Activated naive CD4-positive, alpha-beta T cell treated with anti-CD3 and anti-CD28 coated beads for 36 hours (primary cell): ENCODE measurements at regions of chr21 and their contacts with region 1.

Region 1: GRCh38 chr21:41926117-41926806 is 27.6 kb downstream of the C2CD2 start:
- DNase-seq: peak; percentile 53
- H3K4me3 Mint-ChIP-seq: peak overlapping the region; percentile 85
- H3K27ac Mint-ChIP-seq: peak overlapping the region; percentile 97
- H3K4me1 Mint-ChIP-seq: peaks cover 71% of the 10 kb centered on the region
- H3K27me3 Mint-ChIP-seq: no peaks in the 10 kb centered on the region

Region 2: GRCh38 chr21:41879190-41879998 is 46.9 kb before region 1 on chr21 and contains the start of gene PRDM15:
- CTCF ChIA-PET with region 1: interaction called, 4 read pairs
- intact Hi-C with region 1: loop called (anchors 2 kb)
- DNase-seq: peak; percentile 86
- H3K4me3 Mint-ChIP-seq: peak within 1 kb of the TSS; percentile 84
- H3K27ac Mint-ChIP-seq: peak within 1 kb of the TSS; percentile 91
- H3K4me1 Mint-ChIP-seq: peaks cover 15% of the 10 kb centered on the region
- H3K27me3 Mint-ChIP-seq: no peaks in the 10 kb centered on the region
- total RNA-seq, gene PRDM15: 9.6 to 9.8 TPM

Region 3: DNA sequence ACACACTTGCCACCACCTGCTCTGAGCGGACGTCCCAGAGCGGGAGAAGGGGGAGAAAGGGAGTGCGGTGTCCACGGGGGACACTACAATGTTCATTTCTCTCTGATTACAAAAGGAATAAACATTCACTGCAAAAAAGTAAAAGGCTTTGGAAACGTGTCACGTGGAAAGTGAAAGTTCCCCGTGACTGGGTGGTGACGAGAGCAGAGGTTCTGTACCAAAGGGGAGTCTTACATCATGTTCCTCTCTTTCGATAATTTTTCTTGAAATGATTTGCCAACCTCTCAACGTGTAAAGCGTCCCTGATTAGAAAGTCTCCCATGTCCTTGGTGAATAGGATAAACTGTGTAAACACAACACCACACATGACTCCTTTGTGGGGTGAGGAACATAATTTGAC is 25.2 kb before region 1 on chr21:
- CTCF ChIA-PET with region 1: interaction called, 6 read pairs
- intact Hi-C with region 1: loop called (anchors 1 kb)
- DNase-seq: peak; percentile 78
- H3K4me3 Mint-ChIP-seq: no peak overlapping the region
- H3K27ac Mint-ChIP-seq: peak overlapping the region; percentile 75
- H3K4me1 Mint-ChIP-seq: peaks cover 26% of the 10 kb centered on the region
- H3K27me3 Mint-ChIP-seq: no peaks in the 10 kb centered on the region

Region 4: GRCh38 chr21:41953831-41954653 is 27.8 kb after region 1 on chr21 and contains the start of gene C2CD2:
- CTCF ChIA-PET with region 1: no interaction called
- intact Hi-C with region 1: loop called (anchors 1 kb)
- DNase-seq: peak; percentile 19
- H3K4me3 Mint-ChIP-seq: peak within 1 kb of the TSS; percentile 54
- H3K27ac Mint-ChIP-seq: no peak within 1 kb of the TSS
- H3K4me1 Mint-ChIP-seq: peaks cover 13% of the 10 kb centered on the region
- H3K27me3 Mint-ChIP-seq: peaks cover 4% of the 10 kb centered on the region
- total RNA-seq, gene C2CD2: 6.9 to 7.3 TPM

Region 5: DNA sequence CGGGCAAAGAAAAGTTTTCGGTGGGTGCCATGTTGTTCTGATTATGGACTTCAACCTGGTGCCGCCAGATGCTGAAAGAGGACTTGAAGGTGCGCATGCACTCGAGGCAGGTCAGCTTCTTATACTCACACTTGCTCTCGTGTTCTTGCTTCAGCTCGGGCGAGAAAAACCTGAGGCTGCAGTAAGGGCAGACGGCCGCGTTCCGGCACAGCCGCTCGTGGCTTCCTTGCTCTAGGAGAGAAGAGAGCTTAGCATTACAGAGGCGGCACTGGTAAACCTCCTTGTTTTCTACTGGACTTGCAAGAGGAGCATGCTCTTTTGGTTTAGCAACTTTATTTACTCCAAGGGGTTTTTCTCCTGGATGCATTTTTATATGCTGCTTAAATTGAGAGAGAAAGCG is 65.4 kb after region 1 on chr21:
- CTCF ChIA-PET with region 1: no interaction called
- intact Hi-C with region 1: no loop called
- DNase-seq: no peak
- H3K4me3 Mint-ChIP-seq: no peak overlapping the region
- H3K27ac Mint-ChIP-seq: no peak overlapping the region
- H3K4me1 Mint-ChIP-seq: peaks cover 2% of the 10 kb centered on the region
- H3K27me3 Mint-ChIP-seq: no peaks in the 10 kb centered on the region

Region 6: GRCh38 chr21:42002421-42002958 is 76.2 kb after region 1 on chr21:
- CTCF ChIA-PET with region 1: interaction called, 3 read pairs
- intact Hi-C with region 1: loop called (anchors 1 kb)
- DNase-seq: peak; percentile 89
- H3K4me3 Mint-ChIP-seq: peak overlapping the region; percentile 27
- H3K27ac Mint-ChIP-seq: peak overlapping the region; percentile 86
- H3K4me1 Mint-ChIP-seq: peaks cover 62% of the 10 kb centered on the region
- H3K27me3 Mint-ChIP-seq: no peaks in the 10 kb centered on the region

Region 7: GRCh38 chr21:42009831-42010523 is 83.7 kb after region 1 on chr21 and contains the start of gene ZBTB21:
- CTCF ChIA-PET with region 1: no interaction called
- intact Hi-C with region 1: loop called (anchors 1 kb)
- DNase-seq: peak; percentile 98
- H3K4me3 Mint-ChIP-seq: peak within 1 kb of the TSS; percentile 98
- H3K27ac Mint-ChIP-seq: peak within 1 kb of the TSS; percentile 99
- H3K4me1 Mint-ChIP-seq: peaks cover 32% of the 10 kb centered on the region
- H3K27me3 Mint-ChIP-seq: no peaks in the 10 kb centered on the region
- total RNA-seq, gene ZBTB21: 27.8 to 28.0 TPM